ENCODE measurements at regions of chr13 and their contacts with region 1.

Region 1: GRCh38 chr13:100514788-100515409 is 73.7 kb downstream of the GGACT start:
- DNase-seq: peak; percentile 80 to 92
- H3K4me3 ChIP-seq: no peak overlapping the region
- H3K27ac ChIP-seq: no peak overlapping the region
- H3K4me1 ChIP-seq: peaks cover 0 to 36% (median 8%) of the 10 kb centered on the region in 4 donors
- H3K27me3 ChIP-seq: no peaks in the 10 kb centered on the region
- CTCF ChIP-seq: peak in 5 of 7 experiments; percentile 54 to 82 (median 73)
- EP300 ChIP-seq: no peak
- POLR2A ChIP-seq: no peak

Region 2: GRCh38 chr13:99656092-99656745 is 858.7 kb before region 1 on chr13:
- intact Hi-C with region 1: loop called (anchors 10 kb)
- DNase-seq: peak; percentile 84 to 91
- H3K4me3 ChIP-seq: no peak overlapping the region
- H3K27ac ChIP-seq: no peak overlapping the region
- H3K4me1 ChIP-seq: peaks cover 6 to 41% (median 28%) of the 10 kb centered on the region in 4 donors
- H3K27me3 ChIP-seq: peaks cover 0 to 8% (median 0%) of the 10 kb centered on the region in 3 donors
- CTCF ChIP-seq: peak in 5 of 7 experiments; percentile 57 to 92 (median 89)
- EP300 ChIP-seq: no peak
- POLR2A ChIP-seq: no peak

Region 3: GRCh38 chr13:99916366-99917103 is 598.4 kb before region 1 on chr13:
- intact Hi-C with region 1: loop called (anchors 10 kb)
- DNase-seq: peak in 1 of 2 donors; percentile 77
- H3K4me3 ChIP-seq: no peak overlapping the region
- H3K27ac ChIP-seq: no peak overlapping the region
- H3K4me1 ChIP-seq: peaks cover 0 to 4% (median 0%) of the 10 kb centered on the region in 4 donors
- H3K27me3 ChIP-seq: peaks cover 0 to 45% (median 4%) of the 10 kb centered on the region in 3 donors
- CTCF ChIP-seq: peak in 5 of 7 experiments; percentile 66 to 94 (median 79)
- EP300 ChIP-seq: no peak
- POLR2A ChIP-seq: no peak

Region 4: GRCh38 chr13:100063333-100063732 is 451.6 kb before region 1 on chr13:
- intact Hi-C with region 1: no loop called
- DNase-seq: peak in 1 of 2 donors; percentile 9
- H3K4me3 ChIP-seq: no peak overlapping the region
- H3K27ac ChIP-seq: no peak overlapping the region
- H3K4me1 ChIP-seq: no peaks in the 10 kb centered on the region
- H3K27me3 ChIP-seq: no peaks in the 10 kb centered on the region
- CTCF ChIP-seq: no peak
- EP300 ChIP-seq: no peak
- POLR2A ChIP-seq: no peak

Measured in stomach (tissue), 19 donors.